ENCODE measurements at regions of chr22 and their contacts with region 1.

Region 1: DNA sequence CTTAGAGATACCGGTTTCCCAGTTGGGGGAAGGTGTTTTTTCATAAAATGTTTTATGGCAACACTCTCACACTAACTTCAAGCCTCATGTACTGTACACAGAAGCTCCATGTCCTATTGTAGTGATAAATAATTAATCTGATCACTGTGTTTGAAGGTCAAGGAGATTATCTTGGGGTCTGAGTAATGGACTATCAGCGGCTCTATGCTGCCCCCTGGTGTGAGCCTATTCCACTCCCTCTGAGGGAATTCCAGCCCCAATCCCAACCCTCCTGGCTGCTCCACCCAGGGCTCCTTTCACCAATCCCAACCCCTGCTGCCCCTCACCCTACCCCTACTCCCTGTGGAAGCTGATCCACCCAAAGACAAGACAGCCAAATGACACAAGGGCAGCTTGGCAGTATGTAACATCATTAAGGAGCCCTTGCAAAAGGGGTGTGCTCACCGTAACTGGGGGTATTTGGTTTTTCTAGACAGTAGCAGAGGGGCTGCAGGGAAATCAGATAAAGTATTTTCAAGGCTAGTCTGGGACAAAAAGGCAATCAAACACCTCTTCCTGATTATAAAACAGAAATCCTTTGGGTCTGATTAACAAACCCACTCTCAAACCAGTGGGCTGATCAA is 22.3 kb downstream of the HPS4 start:
- DNase-seq: peak; percentile 71 to 77
- H3K4me3 ChIP-seq: no peak overlapping the region
- H3K27ac ChIP-seq: no peak overlapping the region
- H3K4me1 ChIP-seq: peaks cover 0 to 12% (median 4%) of the 10 kb centered on the region in 4 donors
- H3K27me3 ChIP-seq: no peaks in the 10 kb centered on the region
- CTCF ChIP-seq: peak in 5 of 7 experiments; percentile 53 to 84 (median 71)
- EP300 ChIP-seq: no peak
- POLR2A ChIP-seq: no peak

Region 2: GRCh38 chr22:26398741-26399153 is 62.6 kb before region 1 on chr22:
- intact Hi-C with region 1: loop called (anchors 5 kb)
- DNase-seq: peak; percentile 55 to 74
- H3K4me3 ChIP-seq: no peak overlapping the region
- H3K27ac ChIP-seq: no peak overlapping the region
- H3K4me1 ChIP-seq: no peaks in the 10 kb centered on the region
- H3K27me3 ChIP-seq: peaks cover 0 to 12% (median 9%) of the 10 kb centered on the region in 3 donors
- CTCF ChIP-seq: peak in 5 of 7 experiments; percentile 12 to 64 (median 46)
- EP300 ChIP-seq: no peak
- POLR2A ChIP-seq: no peak

Measured in stomach (tissue), 19 donors.